Activated naive CD4-positive, alpha-beta T cell treated with anti-CD3 and anti-CD28 coated beads for 36 hours (primary cell): ENCODE measurements at regions of chr4 and their contacts with region 1.

Region 1: GRCh38 chr4:107719922-107720722 is at the start of gene PAPSS1:
- DNase-seq: peak; percentile 96
- H3K4me3 Mint-ChIP-seq: peak within 1 kb of the TSS; percentile 86
- H3K27ac Mint-ChIP-seq: peak within 1 kb of the TSS; percentile 77
- H3K4me1 Mint-ChIP-seq: peaks cover 26% of the 10 kb centered on the region
- H3K27me3 Mint-ChIP-seq: no peaks in the 10 kb centered on the region
- total RNA-seq, gene PAPSS1: 28.7 to 29.1 TPM

Region 2: GRCh38 chr4:106315968-106316772 is 1404.0 kb before region 1 on chr4 and contains the starts of genes AIMP1 and TBCK:
- CTCF ChIA-PET with region 1: no interaction called
- intact Hi-C with region 1: loop called (anchors 1 kb)
- DNase-seq: peak; percentile 90
- H3K4me3 Mint-ChIP-seq: no peak within 1 kb of the TSS
- H3K27ac Mint-ChIP-seq: no peak within 1 kb of the TSS
- H3K4me1 Mint-ChIP-seq: peaks cover 45% of the 10 kb centered on the region
- H3K27me3 Mint-ChIP-seq: no peaks in the 10 kb centered on the region
- total RNA-seq, gene AIMP1: 49.7 to 52.0 TPM
- total RNA-seq, gene TBCK: 19.4 to 21.6 TPM

Region 3: GRCh38 chr4:107689912-107690565 is 30.1 kb before region 1 on chr4:
- CTCF ChIA-PET with region 1: no interaction called
- intact Hi-C with region 1: loop called (anchors 1 kb)
- DNase-seq: no peak
- H3K4me3 Mint-ChIP-seq: no peak overlapping the region
- H3K27ac Mint-ChIP-seq: no peak overlapping the region
- H3K4me1 Mint-ChIP-seq: no peaks in the 10 kb centered on the region
- H3K27me3 Mint-ChIP-seq: no peaks in the 10 kb centered on the region

Region 4: GRCh38 chr4:107989537-107990386 is 269.6 kb after region 1 on chr4 and contains the start of gene HADH:
- CTCF ChIA-PET with region 1: interaction called, 3 read pairs
- intact Hi-C with region 1: loop called (anchors 1 kb)
- DNase-seq: peak; percentile 94
- H3K4me3 Mint-ChIP-seq: peak within 1 kb of the TSS; percentile 98
- H3K27ac Mint-ChIP-seq: peak within 1 kb of the TSS; percentile 90
- H3K4me1 Mint-ChIP-seq: peaks cover 57% of the 10 kb centered on the region
- H3K27me3 Mint-ChIP-seq: no peaks in the 10 kb centered on the region
- total RNA-seq, gene HADH: 56.1 to 57.6 TPM

Region 5: DNA sequence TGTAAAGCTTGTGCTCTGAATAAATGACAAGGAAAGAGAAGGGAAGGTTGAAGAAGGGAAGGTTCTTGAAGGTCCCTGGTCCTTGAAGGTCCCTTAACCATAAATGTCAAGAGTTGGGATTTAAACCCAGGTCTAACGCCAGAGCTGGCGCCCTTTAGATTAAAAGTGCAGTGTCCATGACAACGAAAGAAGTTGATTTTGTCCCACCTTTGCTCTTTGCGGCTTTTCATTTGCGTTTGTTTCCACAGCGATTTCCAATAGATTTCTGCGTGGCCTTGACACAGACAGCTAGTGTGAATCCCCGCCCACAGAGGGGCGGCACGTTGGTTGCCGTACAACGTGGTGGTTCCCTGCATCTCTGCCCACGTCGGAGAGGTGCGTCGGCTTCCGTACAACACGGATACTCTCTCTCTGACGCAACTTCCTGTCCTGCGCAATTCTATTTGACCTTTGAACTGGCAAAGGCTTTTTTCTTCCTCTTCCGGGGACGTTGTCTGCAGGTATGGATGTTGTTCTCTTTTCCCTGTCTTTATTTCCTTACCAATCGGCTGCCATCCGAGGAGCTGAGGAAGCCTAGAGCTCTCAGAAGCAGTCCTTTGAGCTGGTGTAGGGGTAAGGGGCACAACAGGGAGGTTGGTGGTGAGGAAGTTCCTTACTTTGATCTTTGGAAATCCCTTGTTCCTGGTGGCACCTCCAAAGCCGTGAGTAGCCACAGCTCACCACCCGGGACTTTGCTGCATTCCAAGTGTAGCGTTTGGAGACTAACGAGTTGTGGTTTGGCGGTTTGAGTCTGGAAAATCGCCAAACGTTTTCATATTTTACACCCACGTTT is 900.2 kb after region 1 on chr4 and contains the start of gene RPL34:
- CTCF ChIA-PET with region 1: no interaction called
- intact Hi-C with region 1: loop called (anchors 1 kb)
- DNase-seq: peak; percentile 99
- H3K4me3 Mint-ChIP-seq: peak within 1 kb of the TSS; percentile 93
- H3K27ac Mint-ChIP-seq: peak within 1 kb of the TSS; percentile 95
- H3K4me1 Mint-ChIP-seq: peaks cover 45% of the 10 kb centered on the region
- H3K27me3 Mint-ChIP-seq: no peaks in the 10 kb centered on the region
- total RNA-seq, gene RPL34: 1,983 to 2,004 TPM

Region 6: DNA sequence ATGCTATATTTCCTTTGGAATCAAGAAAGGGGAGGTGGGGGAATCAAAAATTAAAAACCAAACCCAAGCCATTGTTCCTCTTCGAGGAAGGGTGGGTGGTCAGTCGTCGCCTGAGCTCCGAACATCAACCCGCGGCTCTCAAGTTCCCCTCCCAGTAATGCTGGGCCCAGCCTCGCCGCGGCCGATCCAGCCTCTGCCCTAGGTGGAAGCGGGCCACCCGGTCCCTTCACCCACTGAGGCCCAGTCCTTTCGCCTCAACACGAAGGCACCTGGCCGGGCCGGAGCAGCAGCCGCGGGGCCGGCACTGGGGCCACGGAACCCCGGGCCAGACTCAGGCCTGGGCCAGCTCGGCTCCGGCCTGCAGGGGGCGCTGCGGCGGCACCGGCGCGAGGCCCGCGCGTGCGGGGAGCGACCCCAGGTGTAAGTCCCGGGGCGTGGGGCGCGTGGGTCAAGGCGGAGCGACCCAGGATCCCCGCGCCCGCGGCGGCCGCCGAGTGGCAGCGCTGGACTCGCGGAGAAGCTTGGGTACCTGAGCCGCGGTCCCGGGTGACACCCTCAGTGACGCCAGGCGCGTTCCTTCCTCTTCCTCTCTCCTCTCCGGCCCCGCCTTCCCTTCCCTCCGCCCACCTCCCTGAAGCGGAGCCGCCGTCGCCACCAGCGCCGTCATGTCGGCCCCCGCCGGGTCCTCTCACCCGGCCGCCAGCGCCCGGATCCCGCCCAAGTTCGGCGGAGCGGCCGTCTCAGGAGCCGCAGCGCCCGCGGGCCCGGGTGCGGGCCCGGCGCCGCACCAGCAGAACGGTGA is 1713.3 kb after region 1 on chr4 and contains the start of gene SEC24B:
- CTCF ChIA-PET with region 1: no interaction called
- intact Hi-C with region 1: loop called (anchors 5 kb)
- DNase-seq: peak; percentile 92
- H3K4me3 Mint-ChIP-seq: peak within 1 kb of the TSS; percentile 82
- H3K27ac Mint-ChIP-seq: peak within 1 kb of the TSS; percentile 85
- H3K4me1 Mint-ChIP-seq: peaks cover 62% of the 10 kb centered on the region
- H3K27me3 Mint-ChIP-seq: no peaks in the 10 kb centered on the region
- total RNA-seq, gene SEC24B: 20.6 to 21.1 TPM